MCF 10A (cell line): ENCODE measurements at regions of chr16 and their contacts with region 1.

Region 1: GRCh38 chr16:57757326-57757786 is 21.8 kb downstream of the KATNB1 start:
- DNase-seq: peak; percentile 85
- H3K4me3 Mint-ChIP-seq: no peak overlapping the region
- H3K27ac Mint-ChIP-seq: no peak overlapping the region
- H3K4me1 Mint-ChIP-seq: no peaks in the 10 kb centered on the region
- H3K27me3 Mint-ChIP-seq: no peaks in the 10 kb centered on the region
- CTCF ChIP-seq: peak; percentile 87

Region 2: GRCh38 chr16:57314161-57314785 is 443.1 kb before region 1 on chr16:
- CTCF ChIA-PET with region 1: no interaction called
- POLR2A ChIA-PET with region 1: no interaction called
- intact Hi-C with region 1: no loop called
- DNase-seq: peak; percentile 17
- H3K4me3 Mint-ChIP-seq: no peak overlapping the region
- H3K27ac Mint-ChIP-seq: no peak overlapping the region
- H3K4me1 Mint-ChIP-seq: peaks cover 21% of the 10 kb centered on the region
- H3K27me3 Mint-ChIP-seq: no peaks in the 10 kb centered on the region
- CTCF ChIP-seq: no peak

Region 3: GRCh38 chr16:57510016-57510871 is 247.1 kb before region 1 on chr16:
- CTCF ChIA-PET with region 1: interaction called, 11 read pairs
- POLR2A ChIA-PET with region 1: no interaction called
- intact Hi-C with region 1: no loop called
- DNase-seq: no peak
- H3K4me3 Mint-ChIP-seq: no peak overlapping the region
- H3K27ac Mint-ChIP-seq: no peak overlapping the region
- H3K4me1 Mint-ChIP-seq: no peaks in the 10 kb centered on the region
- H3K27me3 Mint-ChIP-seq: peaks cover 16% of the 10 kb centered on the region
- CTCF ChIP-seq: no peak

Region 4: DNA sequence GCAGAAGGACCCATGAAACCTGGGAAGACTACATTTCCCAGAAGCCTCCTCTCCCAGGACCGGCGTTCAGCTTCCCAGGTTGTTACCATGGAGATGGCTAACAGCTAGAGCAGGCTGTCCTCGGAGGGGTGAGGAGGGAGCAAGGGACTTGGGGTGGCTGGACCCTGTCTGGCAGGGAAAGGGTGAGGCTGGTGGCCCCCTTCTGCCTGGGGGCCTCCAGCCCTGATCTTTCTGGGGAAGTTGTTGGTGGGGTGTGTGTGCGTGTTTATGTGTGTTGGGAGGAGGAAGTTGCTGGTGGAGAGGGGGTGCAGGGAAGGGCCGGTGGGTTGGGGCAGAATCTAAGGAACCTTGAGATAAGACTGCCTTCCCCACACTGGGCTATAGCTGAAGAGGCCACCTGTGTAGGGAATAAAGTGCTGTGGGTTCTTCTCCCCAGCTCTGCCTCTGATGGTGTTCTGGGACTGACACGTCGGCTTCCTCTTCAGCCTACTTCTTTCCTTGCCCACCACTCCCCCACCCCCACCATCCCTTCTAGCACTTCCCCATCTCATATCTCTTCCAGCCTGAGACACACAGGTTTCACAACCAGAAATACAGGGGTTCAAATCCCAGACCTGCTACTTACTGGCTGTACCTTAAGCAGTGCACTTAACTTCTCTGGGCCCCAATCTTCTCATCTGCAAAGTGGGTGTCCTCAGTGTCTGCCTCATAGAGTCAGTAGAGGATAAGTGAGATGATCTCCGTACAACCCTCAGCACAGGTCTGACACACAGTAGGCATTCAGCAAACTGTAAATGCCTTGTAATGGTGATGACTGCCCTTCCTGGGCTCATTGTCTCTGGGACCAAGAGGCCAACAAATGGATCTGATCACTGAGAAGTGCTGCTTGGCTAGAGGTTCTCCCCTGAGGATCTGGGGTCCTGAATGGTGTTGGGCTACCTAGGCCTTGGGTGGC is 62.4 kb before region 1 on chr16 and contains the start of gene DRC7:
- CTCF ChIA-PET with region 1: no interaction called
- POLR2A ChIA-PET with region 1: no interaction called
- intact Hi-C with region 1: no loop called
- DNase-seq: peak; percentile 46
- H3K4me3 Mint-ChIP-seq: peak within 1 kb of the TSS; percentile 10
- H3K27ac Mint-ChIP-seq: no peak within 1 kb of the TSS
- H3K4me1 Mint-ChIP-seq: no peaks in the 10 kb centered on the region
- H3K27me3 Mint-ChIP-seq: peaks cover 20% of the 10 kb centered on the region
- CTCF ChIP-seq: no peak
- total RNA-seq, gene DRC7: not detected in 2 replicates

Region 5: DNA sequence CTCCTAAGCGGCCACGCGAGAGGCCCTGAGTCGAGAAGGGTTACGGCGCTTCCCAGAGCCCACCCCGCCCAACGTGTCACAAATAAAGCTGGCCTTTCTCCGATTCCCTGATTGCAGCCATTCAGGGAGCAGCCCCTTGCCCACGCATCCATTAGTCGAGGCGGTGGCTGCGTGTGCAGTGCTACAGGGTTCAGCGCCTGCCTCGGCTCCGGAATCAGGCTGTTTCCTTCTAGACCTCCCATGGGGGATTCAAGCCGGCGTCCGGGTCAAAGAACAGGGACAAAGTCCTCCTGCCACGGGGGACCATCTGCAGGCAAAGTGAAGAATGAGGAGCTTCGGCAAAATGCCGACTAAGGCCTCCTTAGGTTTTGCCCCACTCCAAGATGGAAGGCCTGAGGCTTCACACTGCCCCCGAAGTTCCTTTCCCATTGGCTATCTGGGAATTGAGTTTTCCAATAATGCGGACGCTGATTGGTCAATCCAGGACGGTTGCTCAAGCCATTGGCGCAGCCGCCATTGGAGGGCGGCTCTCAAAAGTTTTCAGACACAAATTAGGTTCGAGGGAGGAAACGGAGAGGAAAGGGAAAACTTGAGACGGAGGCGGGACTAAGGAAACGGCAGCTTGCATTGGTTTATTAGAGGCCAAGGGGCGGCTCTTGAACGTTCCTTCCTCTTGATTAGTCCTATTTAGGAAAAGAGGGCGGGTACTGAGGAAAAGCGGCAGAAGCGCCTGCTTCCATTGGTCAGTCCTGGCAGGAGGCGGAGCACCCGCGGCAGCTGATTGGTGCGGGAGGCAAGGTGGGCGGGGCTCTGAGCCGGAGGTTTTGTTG is 22.2 kb before region 1 on chr16:
- CTCF ChIA-PET with region 1: interaction called, 6 read pairs
- POLR2A ChIA-PET with region 1: interaction called, 10 read pairs
- intact Hi-C with region 1: no loop called
- DNase-seq: peak; percentile 100
- H3K4me3 Mint-ChIP-seq: peak overlapping the region; percentile 93
- H3K27ac Mint-ChIP-seq: peak overlapping the region; percentile 96
- H3K4me1 Mint-ChIP-seq: peaks cover 23% of the 10 kb centered on the region
- H3K27me3 Mint-ChIP-seq: no peaks in the 10 kb centered on the region
- CTCF ChIP-seq: no peak